ENCODE measurements at regions of chr7 and their contacts with region 1.

Region 1: DNA sequence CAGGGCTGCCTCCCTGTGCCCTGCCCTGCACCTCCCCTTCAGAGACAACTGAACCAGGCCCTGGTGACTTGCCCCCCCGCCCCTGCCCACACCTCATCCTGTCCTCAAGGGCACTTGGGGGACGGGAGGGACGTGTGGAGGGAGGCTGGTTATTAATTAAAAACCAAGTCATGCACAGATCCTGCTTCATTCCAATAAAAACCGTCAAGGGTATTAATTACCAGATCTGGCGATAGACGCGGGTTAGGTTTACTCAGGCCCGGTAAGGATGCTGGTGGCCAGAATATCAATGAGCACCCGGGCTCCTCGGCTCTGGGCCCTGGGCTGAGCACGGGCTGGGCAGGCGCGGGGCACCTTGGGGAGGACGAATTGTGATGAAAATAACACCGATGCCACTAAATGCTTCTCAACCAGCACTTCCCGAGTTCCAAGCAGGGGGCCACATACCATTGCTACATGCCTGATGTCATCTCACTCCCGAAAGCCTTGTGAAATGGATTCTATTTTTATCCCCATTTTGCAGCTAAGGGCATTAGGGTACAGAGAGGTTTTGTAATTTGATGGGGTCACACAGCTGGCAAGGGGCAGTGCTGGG is 24.5 kb upstream of the GTF2IRD1 start:
- DNase-seq: no peak
- ATAC-seq: no peak
- H3K4me3 ChIP-seq: no peak overlapping the region
- H3K4me1 ChIP-seq: no peaks in the 10 kb centered on the region
- CTCF ChIP-seq: no peak

Region 2: DNA sequence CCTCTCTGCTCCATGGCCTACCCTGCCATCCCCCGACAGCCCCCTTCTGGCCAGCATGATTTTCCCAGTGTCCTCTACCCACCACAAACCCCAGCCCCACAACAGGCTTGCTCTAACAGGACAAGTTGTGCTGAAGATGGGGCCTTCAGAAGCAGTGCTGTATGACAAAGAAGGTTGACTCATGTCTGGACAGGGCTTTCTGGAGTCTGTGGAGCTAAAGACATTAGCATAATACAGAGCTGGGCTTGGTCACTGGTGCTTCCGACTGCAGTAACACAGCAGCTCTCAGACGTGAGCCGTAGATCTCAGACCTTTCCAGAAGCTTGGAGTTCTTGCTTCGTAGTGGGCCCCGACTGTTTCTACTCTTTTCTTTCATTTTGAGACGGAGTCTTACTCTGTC is 124.9 kb after region 1 on chr7:
- intact Hi-C with region 1: loop called in 1 of 2 experiments (anchors 10 kb)
- DNase-seq: no peak
- ATAC-seq: no peak
- H3K4me3 ChIP-seq: no peak overlapping the region
- H3K4me1 ChIP-seq: no peaks in the 10 kb centered on the region
- CTCF ChIP-seq: no peak

Measured in mucosa of descending colon (tissue), 3 donors.